ENCODE measurements at regions of chr1 and their contacts with region 1.

Region 1: GRCh38 chr1:25616095-25616986 is at the start of gene MAN1C1:
- DNase-seq: peak; percentile 93
- H3K4me3 ChIP-seq: peak within 1 kb of the TSS; percentile 70 to 98 (median 80)
- H3K27ac ChIP-seq: peak within 1 kb of the TSS; percentile 88 to 94 (median 89)
- H3K4me1 ChIP-seq: peaks cover 0 to 52% (median 48%) of the 10 kb centered on the region in 4 donors
- H3K27me3 ChIP-seq: no peaks in the 10 kb centered on the region
- CTCF ChIP-seq: peak; percentile 46 to 65 (median 55)
- EP300 ChIP-seq: no peak
- POLR2A ChIP-seq: no peak
- total RNA-seq, gene MAN1C1: 12.8 to 32.1 (median 22.9) TPM

Region 2: DNA sequence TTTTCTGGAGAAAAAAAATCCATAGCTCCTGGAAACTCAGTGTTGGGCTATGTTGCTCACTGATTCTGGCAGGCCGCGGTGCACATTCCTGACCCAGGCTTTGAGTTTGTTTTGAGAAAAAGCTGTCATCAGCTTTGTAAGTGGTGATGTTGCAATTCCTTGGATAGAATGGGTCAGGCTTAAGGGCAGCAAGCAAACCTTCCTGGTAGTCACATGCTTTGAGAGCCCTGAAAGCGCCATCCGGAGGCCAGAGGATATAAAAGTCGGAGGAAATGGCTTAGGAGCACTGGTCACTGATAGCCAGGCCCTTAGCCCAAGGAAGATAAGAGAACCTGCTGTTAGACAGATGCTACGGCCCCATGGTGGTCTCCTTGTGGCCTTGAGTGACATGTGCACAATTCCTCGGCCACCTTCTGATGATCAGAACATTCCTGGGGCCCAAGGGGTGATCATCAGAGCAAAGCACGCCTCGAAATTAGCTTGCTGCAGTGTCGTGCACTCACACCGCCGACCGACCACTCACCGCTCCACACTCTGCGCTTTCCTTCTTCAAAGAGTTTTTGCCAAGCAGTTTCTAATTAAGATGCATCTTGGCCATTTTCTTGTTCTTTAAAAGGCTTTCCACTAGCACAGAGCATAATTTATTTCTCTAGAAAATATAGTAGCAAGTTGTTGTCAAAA is 78.9 kb after region 1 on chr1:
- intact Hi-C with region 1: loop called (anchors 1 kb)
- DNase-seq: peak; percentile 94
- H3K4me3 ChIP-seq: no peak overlapping the region
- H3K27ac ChIP-seq: peak overlapping the region; percentile 81 to 90 (median 88)
- H3K4me1 ChIP-seq: peaks cover 0 to 73% (median 69%) of the 10 kb centered on the region in 4 donors
- H3K27me3 ChIP-seq: no peaks in the 10 kb centered on the region
- CTCF ChIP-seq: peak in 1 of 4 experiments; percentile 13
- EP300 ChIP-seq: peak in 2 of 4 donors; percentile 79 to 83
- POLR2A ChIP-seq: no peak